Posterior vena cava (tissue), 2 donors: ENCODE measurements at regions of chr1 and their contacts with region 1.

Region 1: DNA sequence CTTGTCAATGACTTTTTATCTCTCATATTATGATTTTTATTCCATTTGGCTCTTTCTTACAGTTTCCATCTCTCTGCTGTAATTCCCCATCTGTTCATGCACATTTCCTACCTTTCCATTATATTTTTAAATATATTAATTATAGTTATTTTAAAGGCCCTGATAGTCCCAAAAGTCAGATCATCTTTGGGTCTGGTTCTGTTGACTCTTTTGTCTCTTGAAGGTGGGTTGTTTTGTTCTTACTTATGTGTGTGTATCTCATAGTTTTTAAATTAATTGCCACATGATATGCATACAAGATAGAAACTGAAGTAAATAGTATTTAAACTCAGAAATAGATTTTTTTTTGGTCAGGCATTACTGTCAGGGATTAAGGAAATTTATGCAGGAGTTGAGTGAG is 178.0 kb upstream of the AJAP1 start:
- DNase-seq: no peak

Region 2: DNA sequence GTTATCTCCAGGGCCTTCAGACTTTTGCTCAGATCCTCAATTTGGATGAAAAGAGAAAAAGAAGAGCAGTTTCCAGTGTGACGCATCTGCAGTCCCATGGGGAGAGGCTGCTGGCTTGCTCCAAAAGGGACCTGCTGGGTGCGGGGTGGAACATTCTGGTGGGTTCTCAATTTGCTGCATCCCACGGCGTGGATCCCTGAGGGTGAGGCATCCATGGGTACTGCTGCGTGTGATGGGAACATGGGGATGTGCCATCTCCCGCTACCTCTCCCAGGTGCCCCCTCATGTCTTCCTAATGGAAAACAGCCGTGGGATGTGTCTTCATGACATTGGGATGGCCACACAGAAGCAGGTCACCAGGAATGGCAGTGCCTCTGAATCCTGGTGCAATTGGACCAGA is 43.3 kb before region 1 on chr1:
- intact Hi-C with region 1: loop called in 1 of 2 experiments (anchors 1 kb)
- DNase-seq: no peak

Region 3: DNA sequence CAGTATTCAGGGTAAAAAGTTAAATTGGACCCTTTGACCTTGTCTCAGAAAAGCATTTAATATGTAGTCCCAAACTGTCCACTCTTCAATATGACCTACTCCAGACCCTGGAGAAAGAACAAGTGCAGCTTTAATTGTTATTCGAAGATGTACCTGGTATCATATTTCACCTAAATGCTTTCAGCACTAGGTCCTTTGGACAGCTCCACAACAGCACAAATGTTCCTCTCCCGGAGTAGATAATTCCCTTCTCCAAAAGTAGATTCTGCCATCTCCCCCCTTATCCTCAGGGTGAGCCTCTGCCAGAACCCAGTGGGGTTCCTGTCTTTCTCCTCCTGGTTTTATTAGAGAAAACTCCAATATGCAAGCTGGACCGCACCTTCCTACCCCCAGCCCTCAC is 73.5 kb after region 1 on chr1:
- intact Hi-C with region 1: no loop called
- DNase-seq: no peak